ENCODE measurements at regions of chr1 and their contacts with region 1.

Region 1: DNA sequence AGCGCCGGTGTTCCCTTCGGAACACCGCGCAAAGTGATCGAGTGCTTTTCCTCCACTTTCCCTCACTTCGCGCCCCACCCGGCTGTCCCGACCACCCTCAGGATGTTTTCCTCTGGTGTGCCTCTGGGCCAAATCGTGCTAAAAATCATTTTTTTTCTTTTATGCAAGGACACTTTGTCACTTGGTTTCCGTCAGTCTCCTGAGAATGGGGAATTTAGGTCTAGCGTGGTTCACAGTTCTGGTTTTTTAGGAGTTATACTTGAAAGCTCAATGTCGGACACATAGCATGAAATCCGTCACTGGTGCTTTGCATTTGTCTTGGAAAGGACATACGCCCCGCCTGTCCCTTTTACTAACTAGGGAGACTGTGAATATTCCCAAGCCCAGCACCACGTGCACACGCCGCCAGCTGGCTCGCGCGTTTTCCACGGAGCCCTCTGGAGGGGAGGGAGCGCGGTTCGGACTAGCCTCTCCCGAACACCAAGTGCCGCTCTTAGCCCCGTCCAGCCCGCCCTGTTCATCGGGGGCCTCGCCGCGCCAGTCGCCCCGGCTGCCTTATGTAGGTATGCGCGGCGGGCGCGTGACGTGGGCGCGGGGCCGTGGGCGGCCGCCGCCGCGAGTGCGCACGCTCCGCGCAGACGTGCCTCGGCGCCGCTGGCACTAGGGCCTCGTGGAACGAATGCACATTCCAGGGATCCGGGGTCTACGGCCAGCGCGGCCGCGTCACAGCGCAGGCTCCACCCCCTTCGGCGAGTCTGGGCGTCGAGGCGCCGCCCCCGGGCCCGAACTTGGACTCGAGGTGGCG is 572 bp upstream of the IRF2BP2 start:
- DNase-seq: peak; percentile 92
- ATAC-seq: peak; percentile 54
- H3K4me3 Mint-ChIP-seq: peak overlapping the region; percentile 93
- H3K27ac Mint-ChIP-seq: peak overlapping the region; percentile 96
- H3K4me1 Mint-ChIP-seq: peaks cover 42% of the 10 kb centered on the region
- H3K27me3 Mint-ChIP-seq: no peaks in the 10 kb centered on the region

Region 2: DNA sequence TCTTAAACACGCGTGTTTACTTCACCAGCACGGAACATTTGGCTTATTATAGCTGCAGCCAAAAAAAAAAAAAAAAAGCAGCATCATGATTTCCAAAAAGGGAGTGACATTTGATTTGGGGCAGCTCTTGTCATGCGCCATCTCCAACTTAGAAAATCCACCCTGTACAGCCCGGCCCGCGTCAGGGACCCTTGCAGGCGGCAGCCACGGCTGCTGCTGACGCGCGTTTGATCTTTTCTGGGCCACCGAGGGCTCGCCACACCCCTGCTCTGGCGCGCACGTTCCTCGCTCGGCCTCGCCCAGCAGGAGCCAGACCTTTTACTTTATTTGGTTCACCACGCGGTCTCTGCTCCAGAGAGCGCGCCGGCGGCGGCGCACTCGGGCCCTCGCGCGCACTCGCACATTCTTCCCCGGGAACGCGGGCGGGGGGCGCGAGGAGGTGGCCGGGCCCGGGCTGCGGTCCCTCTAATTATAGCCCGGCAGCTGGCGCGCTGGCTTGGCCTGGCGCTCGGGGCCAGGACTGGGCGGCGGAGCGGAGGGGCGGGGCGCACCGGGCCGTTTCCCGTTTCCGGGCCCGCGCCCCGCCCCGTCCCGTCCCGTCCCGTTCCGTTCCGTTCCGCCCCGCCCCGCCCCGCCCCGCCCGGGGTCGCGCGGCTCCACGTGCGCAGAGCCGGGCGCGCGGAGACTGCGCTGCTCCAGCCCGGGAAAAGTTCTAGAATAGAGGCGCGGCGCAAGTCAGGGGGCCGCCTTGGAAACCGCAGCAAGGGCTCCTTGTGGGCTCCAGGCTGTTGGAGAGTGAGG is 10.7 kb before region 1 on chr1:
- POLR2A ChIA-PET with region 1: interaction called, 73 read pairs
- DNase-seq: peak; percentile 83
- ATAC-seq: peak; percentile 71
- H3K4me3 Mint-ChIP-seq: peak overlapping the region; percentile 88
- H3K27ac Mint-ChIP-seq: peak overlapping the region; percentile 93
- H3K4me1 Mint-ChIP-seq: peaks cover 46% of the 10 kb centered on the region
- H3K27me3 Mint-ChIP-seq: no peaks in the 10 kb centered on the region

Region 3: DNA sequence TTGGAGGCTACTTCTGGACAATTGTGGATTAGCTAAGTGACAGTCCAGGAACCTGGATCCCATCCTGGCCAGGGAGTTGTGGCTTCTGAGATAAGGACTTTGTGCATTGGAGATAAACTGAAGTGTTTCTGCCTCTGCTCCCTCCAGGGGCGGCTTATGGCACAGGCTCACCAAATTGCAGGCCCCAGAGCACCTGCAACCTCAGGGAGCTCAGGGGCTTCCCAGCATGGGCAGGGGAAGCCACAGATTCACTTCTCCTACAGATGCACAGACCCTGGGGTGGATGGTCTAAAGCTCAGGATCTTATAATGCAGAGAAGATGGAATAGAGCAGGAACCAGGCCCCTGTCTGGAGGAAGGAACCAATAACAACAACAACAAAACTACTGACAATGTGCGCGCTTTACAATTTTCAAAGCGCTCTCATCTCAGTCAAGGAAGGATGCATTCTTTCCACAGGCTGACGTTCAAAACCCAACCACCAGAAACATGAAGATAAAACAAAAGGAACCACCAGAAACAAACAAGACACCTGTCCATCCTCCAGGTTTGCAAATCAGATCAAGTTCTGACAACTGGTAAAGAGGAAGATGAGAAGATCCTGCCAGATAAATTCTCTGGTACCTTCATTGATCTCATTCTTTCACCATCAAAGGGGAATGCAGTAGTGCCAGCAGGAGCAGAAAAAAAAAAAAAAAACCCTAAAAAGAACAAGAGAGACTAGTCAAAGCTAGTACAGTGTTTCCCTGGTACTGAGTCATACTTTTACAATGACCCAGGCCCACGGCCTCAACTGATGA is 120.4 kb after region 1 on chr1:
- POLR2A ChIA-PET with region 1: interaction called, 188 read pairs
- DNase-seq: peak; percentile 45
- ATAC-seq: peak; percentile 63
- H3K4me3 Mint-ChIP-seq: peak overlapping the region; percentile 39
- H3K27ac Mint-ChIP-seq: peak overlapping the region; percentile 82
- H3K4me1 Mint-ChIP-seq: peaks cover 46% of the 10 kb centered on the region
- H3K27me3 Mint-ChIP-seq: no peaks in the 10 kb centered on the region

Region 4: DNA sequence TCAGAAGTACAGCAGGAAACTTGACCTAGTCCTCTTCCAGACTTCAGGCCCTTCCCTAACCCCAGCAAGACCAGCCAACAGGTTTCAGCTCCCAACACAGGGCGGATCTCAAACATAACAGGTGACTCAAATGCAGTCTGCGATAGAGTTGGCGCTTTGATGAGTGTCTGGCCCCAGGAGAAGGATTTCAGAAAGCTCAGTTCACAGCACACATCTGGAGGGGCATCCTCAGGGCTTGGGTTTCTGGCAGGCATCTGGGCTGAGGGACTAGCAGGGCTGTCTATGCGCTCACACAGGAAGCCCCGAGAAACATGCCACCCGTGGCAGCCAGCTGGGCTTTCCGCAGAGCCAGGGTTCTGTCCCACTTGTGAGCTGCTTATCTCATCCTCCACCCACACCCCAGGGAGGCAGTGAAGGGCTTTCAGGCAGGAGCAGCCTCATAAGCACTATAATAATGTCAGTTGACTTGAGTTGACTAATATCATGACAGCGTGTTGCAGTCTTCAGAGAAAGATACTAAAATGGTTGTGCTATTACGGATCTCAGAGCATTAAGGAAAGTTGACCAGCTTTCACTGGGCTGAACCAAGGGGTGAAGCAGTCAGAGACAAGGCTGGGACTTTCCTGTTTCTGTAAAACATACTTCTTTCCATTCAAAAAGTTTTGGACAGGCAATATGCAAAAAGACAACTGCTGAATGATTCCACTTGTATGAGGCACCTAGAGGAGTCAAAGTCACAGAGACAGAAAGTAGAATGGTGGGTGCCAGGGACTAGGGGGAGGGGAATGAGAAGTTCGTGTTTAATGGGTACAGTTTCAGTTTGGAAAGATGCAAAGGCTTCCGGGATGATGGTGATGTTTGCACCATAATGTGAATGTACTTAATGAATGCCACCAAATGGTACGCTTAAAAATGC is 232.4 kb after region 1 on chr1:
- POLR2A ChIA-PET with region 1: interaction called, 56 read pairs
- DNase-seq: peak; percentile 65
- ATAC-seq: peak; percentile 64
- H3K4me3 Mint-ChIP-seq: peak overlapping the region; percentile 72
- H3K27ac Mint-ChIP-seq: peak overlapping the region; percentile 93
- H3K4me1 Mint-ChIP-seq: peaks cover 72% of the 10 kb centered on the region
- H3K27me3 Mint-ChIP-seq: no peaks in the 10 kb centered on the region

Region 5: GRCh38 chr1:234963180-234963903 is 352.8 kb after region 1 on chr1:
- POLR2A ChIA-PET with region 1: interaction called, 17 read pairs
- DNase-seq: peak; percentile 86
- ATAC-seq: peak; percentile 77
- H3K4me3 Mint-ChIP-seq: peak overlapping the region; percentile 71
- H3K27ac Mint-ChIP-seq: peak overlapping the region; percentile 88
- H3K4me1 Mint-ChIP-seq: peaks cover 59% of the 10 kb centered on the region
- H3K27me3 Mint-ChIP-seq: no peaks in the 10 kb centered on the region

Region 6: GRCh38 chr1:235077571-235078479 is 467.3 kb after region 1 on chr1:
- POLR2A ChIA-PET with region 1: interaction called, 21 read pairs
- DNase-seq: no peak
- ATAC-seq: peak; percentile 56
- H3K4me3 Mint-ChIP-seq: peak overlapping the region; percentile 4
- H3K27ac Mint-ChIP-seq: peak overlapping the region; percentile 66
- H3K4me1 Mint-ChIP-seq: peaks cover 30% of the 10 kb centered on the region
- H3K27me3 Mint-ChIP-seq: no peaks in the 10 kb centered on the region

Measured in activated naive CD8-positive, alpha-beta T cell treated with anti-CD3 and anti-CD28 coated beads, Interleukin-2, amount 10 ng/mL, durations not matched to agents 7 days and 5 days (primary cell).